CD8-positive, alpha-beta T cell (primary cell): ENCODE measurements at regions of chr10 and their contacts with region 1.

Region 1: DNA sequence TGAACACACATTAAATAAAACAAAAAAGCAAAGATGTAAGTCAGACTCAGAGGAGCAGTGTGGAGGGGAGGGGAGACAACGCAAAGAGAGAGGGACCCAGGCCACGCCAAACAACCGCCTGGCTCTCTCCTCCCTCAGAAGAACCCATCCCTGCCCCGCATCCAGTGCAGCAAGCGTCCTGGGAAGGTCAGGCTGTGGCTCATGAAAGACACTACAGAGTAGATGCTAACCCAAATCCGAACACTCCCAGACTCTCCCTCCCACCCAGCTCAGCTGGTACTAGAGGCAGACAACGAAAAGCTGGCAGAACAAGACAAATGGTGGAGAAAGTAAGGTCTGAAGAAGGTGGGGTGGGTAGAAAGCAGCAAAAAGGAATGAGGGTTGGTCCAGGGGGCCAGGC is 39.0 kb downstream of the KCNMA1 start:
- DNase-seq: no peak
- ATAC-seq: no peak
- H3K4me3 ChIP-seq: no peak overlapping the region
- H3K4me3 Mint-ChIP-seq: no peak overlapping the region
- H3K27ac ChIP-seq: no peak overlapping the region
- H3K27ac Mint-ChIP-seq: no peak overlapping the region
- H3K4me1 ChIP-seq: peaks cover 12% of the 10 kb centered on the region
- H3K4me1 Mint-ChIP-seq: peaks cover 12% of the 10 kb centered on the region
- H3K27me3 ChIP-seq: no peaks in the 10 kb centered on the region
- H3K27me3 Mint-ChIP-seq: peaks cover 2% of the 10 kb centered on the region
- CTCF ChIP-seq: no peak

Region 2: GRCh38 chr10:76786504-76787072 is 812.0 kb before region 1 on chr10:
- CTCF ChIA-PET with region 1: no interaction called
- POLR2A ChIA-PET with region 1: no interaction called
- intact Hi-C with region 1: no loop called
- DNase-seq: no peak
- ATAC-seq: no peak
- H3K4me3 ChIP-seq: no peak overlapping the region
- H3K4me3 Mint-ChIP-seq: no peak overlapping the region
- H3K27ac ChIP-seq: no peak overlapping the region
- H3K27ac Mint-ChIP-seq: no peak overlapping the region
- H3K4me1 ChIP-seq: no peaks in the 10 kb centered on the region
- H3K4me1 Mint-ChIP-seq: no peaks in the 10 kb centered on the region
- H3K27me3 ChIP-seq: no peaks in the 10 kb centered on the region
- H3K27me3 Mint-ChIP-seq: no peaks in the 10 kb centered on the region
- CTCF ChIP-seq: no peak

Region 3: GRCh38 chr10:77333610-77334340 is 264.8 kb before region 1 on chr10:
- CTCF ChIA-PET with region 1: no interaction called
- POLR2A ChIA-PET with region 1: no interaction called
- intact Hi-C with region 1: no loop called
- DNase-seq: no peak
- ATAC-seq: no peak
- H3K4me3 ChIP-seq: no peak overlapping the region
- H3K4me3 Mint-ChIP-seq: no peak overlapping the region
- H3K27ac ChIP-seq: no peak overlapping the region
- H3K27ac Mint-ChIP-seq: no peak overlapping the region
- H3K4me1 ChIP-seq: no peaks in the 10 kb centered on the region
- H3K4me1 Mint-ChIP-seq: no peaks in the 10 kb centered on the region
- H3K27me3 ChIP-seq: no peaks in the 10 kb centered on the region
- H3K27me3 Mint-ChIP-seq: no peaks in the 10 kb centered on the region
- CTCF ChIP-seq: no peak

Region 4: DNA sequence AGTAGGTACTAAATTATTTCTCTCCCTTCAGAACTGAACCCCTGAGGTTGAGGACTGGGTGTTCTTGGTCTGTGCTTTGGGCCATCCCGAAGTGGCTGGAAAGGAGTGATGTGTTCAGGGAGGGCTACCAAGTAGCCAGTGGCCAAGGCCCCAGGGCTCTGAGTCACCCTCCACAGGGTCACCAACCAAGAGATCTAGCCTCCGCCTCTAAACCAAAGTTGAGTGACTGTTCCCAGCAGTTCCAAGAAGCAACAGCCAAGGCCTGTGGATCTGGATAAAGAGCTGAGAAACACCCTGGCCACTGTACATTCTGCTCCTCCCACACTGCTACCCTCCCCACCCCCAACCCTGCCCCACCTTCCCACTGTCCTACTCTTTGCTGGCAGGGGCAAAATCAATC is 74.5 kb after region 1 on chr10:
- CTCF ChIA-PET with region 1: no interaction called
- POLR2A ChIA-PET with region 1: no interaction called
- intact Hi-C with region 1: no loop called
- DNase-seq: no peak
- ATAC-seq: no peak
- H3K4me3 ChIP-seq: no peak overlapping the region
- H3K4me3 Mint-ChIP-seq: no peak overlapping the region
- H3K27ac ChIP-seq: no peak overlapping the region
- H3K27ac Mint-ChIP-seq: no peak overlapping the region
- H3K4me1 ChIP-seq: no peaks in the 10 kb centered on the region
- H3K4me1 Mint-ChIP-seq: no peaks in the 10 kb centered on the region
- H3K27me3 ChIP-seq: no peaks in the 10 kb centered on the region
- H3K27me3 Mint-ChIP-seq: peaks cover 35% of the 10 kb centered on the region
- CTCF ChIP-seq: no peak

Region 5: DNA sequence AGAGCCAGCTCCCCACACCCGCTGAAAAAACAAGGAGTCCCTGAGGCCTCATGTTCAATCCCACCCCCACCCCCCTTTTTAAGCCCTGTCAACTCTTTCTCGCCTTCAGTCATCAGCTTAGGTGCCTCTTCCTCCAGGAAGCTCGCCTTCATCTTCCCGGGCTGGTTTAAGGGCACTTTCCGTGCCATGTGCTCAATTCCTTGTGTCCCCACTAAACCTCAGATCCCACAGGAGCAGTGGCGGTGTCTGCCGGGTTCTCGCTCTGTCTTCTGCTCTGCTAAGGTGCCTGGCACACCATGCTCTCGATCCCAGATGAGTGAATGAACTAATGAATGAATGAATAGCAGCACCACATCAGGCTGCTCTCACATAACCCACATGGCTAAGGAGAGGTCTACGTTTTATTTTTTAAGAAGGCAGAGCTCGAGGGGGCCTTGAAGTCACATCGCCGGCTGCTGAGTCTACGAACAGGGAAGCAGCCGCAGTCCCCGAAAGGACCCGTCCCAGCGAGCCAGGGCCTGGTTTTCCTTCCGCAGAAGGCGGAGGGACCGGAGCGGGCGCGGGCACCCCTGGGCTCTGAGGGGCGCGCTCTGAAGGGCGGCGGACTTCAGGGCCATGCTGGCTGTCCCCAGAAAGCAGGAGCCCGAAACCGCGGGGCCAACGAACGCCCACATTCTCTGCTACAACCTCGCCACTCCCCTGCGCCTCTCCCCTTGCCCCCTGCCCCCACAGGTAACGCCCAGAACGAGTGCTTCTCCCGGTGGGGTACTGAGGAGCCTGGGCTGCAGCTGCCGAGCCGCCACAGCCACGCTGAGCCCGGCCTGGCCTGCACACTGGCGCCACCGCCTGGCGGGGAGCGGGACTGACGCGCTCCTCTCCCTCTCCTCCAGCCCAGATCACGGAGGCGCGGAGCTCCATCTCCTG is 112.4 kb after region 1 on chr10:
- CTCF ChIA-PET with region 1: no interaction called
- POLR2A ChIA-PET with region 1: no interaction called
- intact Hi-C with region 1: no loop called
- DNase-seq: peak; percentile 43 to 82 (median 69)
- ATAC-seq: peak; percentile 97
- H3K4me3 ChIP-seq: peak overlapping the region in 1 of 2 experiments; percentile 40
- H3K4me3 Mint-ChIP-seq: peak overlapping the region; percentile 72
- H3K27ac ChIP-seq: no peak overlapping the region
- H3K27ac Mint-ChIP-seq: no peak overlapping the region
- H3K4me1 ChIP-seq: no peaks in the 10 kb centered on the region
- H3K4me1 Mint-ChIP-seq: peaks cover 6% of the 10 kb centered on the region
- H3K27me3 ChIP-seq: peaks cover 1 to 3% of the 10 kb centered on the region in 2 experiments
- H3K27me3 Mint-ChIP-seq: peaks cover 22% of the 10 kb centered on the region
- CTCF ChIP-seq: peak; percentile 93

Region 6: GRCh38 chr10:78648256-78648860 is 1049.8 kb after region 1 on chr10:
- CTCF ChIA-PET with region 1: no interaction called
- POLR2A ChIA-PET with region 1: no interaction called
- intact Hi-C with region 1: loop called in 1 of 2 experiments (anchors 5 kb)
- DNase-seq: no peak
- ATAC-seq: no peak
- H3K4me3 ChIP-seq: no peak overlapping the region
- H3K4me3 Mint-ChIP-seq: no peak overlapping the region
- H3K27ac ChIP-seq: no peak overlapping the region
- H3K27ac Mint-ChIP-seq: no peak overlapping the region
- H3K4me1 ChIP-seq: no peaks in the 10 kb centered on the region
- H3K4me1 Mint-ChIP-seq: no peaks in the 10 kb centered on the region
- H3K27me3 ChIP-seq: no peaks in the 10 kb centered on the region
- H3K27me3 Mint-ChIP-seq: peaks cover 9% of the 10 kb centered on the region
- CTCF ChIP-seq: no peak